ENCODE measurements at regions of chr5 and their contacts with region 1.

Region 1: DNA sequence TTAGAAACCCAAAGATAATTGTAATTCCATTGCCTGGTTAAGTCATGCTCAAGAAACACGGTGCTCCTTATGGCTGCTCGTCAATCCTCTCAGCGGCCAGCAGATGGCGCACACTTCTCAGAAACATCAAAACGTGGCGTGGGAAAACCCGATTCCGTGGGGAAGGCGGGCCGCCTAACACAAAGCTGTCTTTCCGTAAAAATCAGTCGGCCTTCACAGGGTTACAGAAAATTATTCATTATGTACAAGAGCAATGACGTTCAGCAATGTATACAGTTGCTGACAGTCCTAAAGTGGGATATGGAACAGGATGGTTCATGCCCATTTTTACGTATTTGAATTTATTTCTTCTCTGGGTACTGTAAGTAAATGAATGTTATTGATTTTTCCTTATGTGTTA is 83.5 kb downstream of the PDE4D start:
- DNase-seq: peak; percentile 72 to 91 (median 81)
- H3K4me3 ChIP-seq: peak overlapping the region; percentile 4 to 43 (median 16)
- H3K27ac ChIP-seq: no peak overlapping the region
- H3K4me1 ChIP-seq: peaks cover 0 to 3% (median 0%) of the 10 kb centered on the region in 3 donors
- H3K27me3 ChIP-seq: no peaks in the 10 kb centered on the region
- CTCF ChIP-seq: peak; percentile 94

Region 2: DNA sequence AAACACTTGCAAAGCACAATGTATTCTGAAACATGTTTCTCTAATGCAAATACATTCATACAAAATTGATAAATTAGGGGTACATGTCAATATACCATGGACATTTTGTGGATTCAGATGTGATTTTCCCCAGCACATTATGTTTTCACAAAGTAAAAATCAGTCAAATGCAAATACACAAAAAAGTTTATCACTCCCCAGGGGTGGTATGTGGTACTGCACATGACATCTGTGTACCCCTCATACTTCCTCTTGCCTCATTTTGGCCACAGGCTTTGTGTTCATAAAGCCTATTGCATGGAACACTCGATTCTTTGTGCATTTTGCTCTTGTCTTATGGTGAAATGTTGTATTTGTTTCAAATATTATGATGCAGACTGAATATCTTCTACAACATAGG is 200.3 kb after region 1 on chr5:
- intact Hi-C with region 1: no loop called
- DNase-seq: no peak
- H3K4me3 ChIP-seq: no peak overlapping the region
- H3K27ac ChIP-seq: no peak overlapping the region
- H3K4me1 ChIP-seq: no peaks in the 10 kb centered on the region
- H3K27me3 ChIP-seq: no peaks in the 10 kb centered on the region
- CTCF ChIP-seq: no peak

Region 3: GRCh38 chr5:60382716-60383115 is 572.7 kb after region 1 on chr5:
- intact Hi-C with region 1: loop called (anchors 10 kb)
- DNase-seq: peak in 2 of 5 donors; percentile 57 to 79
- H3K4me3 ChIP-seq: no peak overlapping the region
- H3K27ac ChIP-seq: no peak overlapping the region
- H3K4me1 ChIP-seq: peaks cover 0 to 5% (median 4%) of the 10 kb centered on the region in 3 donors
- H3K27me3 ChIP-seq: no peaks in the 10 kb centered on the region
- CTCF ChIP-seq: peak; percentile 40